Activated CD8-positive, alpha-beta memory T cell treated with anti-CD3 and anti-CD28 coated beads, Interleukin-2, amount 10 ng/mL, durations not matched to agents 7 days and 5 days (primary cell): ENCODE measurements at regions of chr16 and their contacts with region 1.

Region 1: GRCh38 chr16:89860747-89861304 is 12.6 kb upstream of the TCF25 start:
- DNase-seq: peak; percentile 83
- ATAC-seq: peak; percentile 87
- H3K4me3 Mint-ChIP-seq: no peak overlapping the region
- H3K27ac Mint-ChIP-seq: no peak overlapping the region
- H3K4me1 Mint-ChIP-seq: peaks cover 27% of the 10 kb centered on the region
- H3K27me3 Mint-ChIP-seq: peaks cover 14% of the 10 kb centered on the region

Region 2: GRCh38 chr16:89536886-89537548 is 323.8 kb before region 1 on chr16:
- CTCF ChIA-PET with region 1: no interaction called
- DNase-seq: no peak
- ATAC-seq: no peak
- H3K4me3 Mint-ChIP-seq: no peak overlapping the region
- H3K27ac Mint-ChIP-seq: no peak overlapping the region
- H3K4me1 Mint-ChIP-seq: peaks cover 27% of the 10 kb centered on the region
- H3K27me3 Mint-ChIP-seq: no peaks in the 10 kb centered on the region

Region 3: GRCh38 chr16:89700100-89700648 is 160.7 kb before region 1 on chr16:
- CTCF ChIA-PET with region 1: interaction called, 93 read pairs
- DNase-seq: peak; percentile 98
- ATAC-seq: peak; percentile 38
- H3K4me3 Mint-ChIP-seq: peak overlapping the region; percentile 66
- H3K27ac Mint-ChIP-seq: peak overlapping the region; percentile 24
- H3K4me1 Mint-ChIP-seq: peaks cover 33% of the 10 kb centered on the region
- H3K27me3 Mint-ChIP-seq: no peaks in the 10 kb centered on the region

Region 4: GRCh38 chr16:89720813-89721545 is 139.8 kb before region 1 on chr16 and contains the starts of genes VPS9D1 and ZNF276:
- CTCF ChIA-PET with region 1: interaction called, 16 read pairs
- DNase-seq: peak; percentile 87
- ATAC-seq: peak; percentile 48
- H3K4me3 Mint-ChIP-seq: peak within 1 kb of the TSS; percentile 86
- H3K27ac Mint-ChIP-seq: peak within 1 kb of the TSS; percentile 99
- H3K4me1 Mint-ChIP-seq: peaks cover 46% of the 10 kb centered on the region
- H3K27me3 Mint-ChIP-seq: no peaks in the 10 kb centered on the region
- total RNA-seq, gene VPS9D1: 3.6 to 4.6 TPM
- total RNA-seq, gene ZNF276: 38.0 to 58.1 TPM

Region 5: DNA sequence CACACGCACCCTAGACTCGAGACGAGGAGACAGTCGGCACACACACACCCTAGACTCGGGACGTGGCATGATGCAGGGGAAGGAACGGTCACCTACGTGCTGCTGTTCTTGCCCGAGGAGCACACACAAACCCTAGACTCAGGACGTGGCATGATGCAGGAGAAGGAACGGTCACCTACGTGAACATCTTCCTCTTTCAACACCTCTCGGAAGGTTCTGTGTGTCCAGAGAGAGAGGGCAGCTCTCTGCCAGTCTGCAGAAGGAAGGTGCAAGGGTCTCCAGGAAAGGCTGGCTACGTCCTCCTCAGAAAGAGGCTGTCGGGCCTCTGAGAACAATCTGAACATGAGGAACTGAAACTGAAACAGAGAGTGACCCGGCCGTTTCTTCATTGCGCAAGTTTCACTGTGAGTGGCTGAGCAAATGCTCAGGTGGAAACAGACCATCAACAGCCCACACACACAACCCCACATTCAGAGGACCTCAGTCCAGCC is 96.1 kb before region 1 on chr16:
- CTCF ChIA-PET with region 1: interaction called, 18 read pairs
- DNase-seq: peak; percentile 90
- ATAC-seq: peak; percentile 89
- H3K4me3 Mint-ChIP-seq: peak overlapping the region; percentile 85
- H3K27ac Mint-ChIP-seq: peak overlapping the region; percentile 94
- H3K4me1 Mint-ChIP-seq: peaks cover 59% of the 10 kb centered on the region
- H3K27me3 Mint-ChIP-seq: no peaks in the 10 kb centered on the region

Region 6: DNA sequence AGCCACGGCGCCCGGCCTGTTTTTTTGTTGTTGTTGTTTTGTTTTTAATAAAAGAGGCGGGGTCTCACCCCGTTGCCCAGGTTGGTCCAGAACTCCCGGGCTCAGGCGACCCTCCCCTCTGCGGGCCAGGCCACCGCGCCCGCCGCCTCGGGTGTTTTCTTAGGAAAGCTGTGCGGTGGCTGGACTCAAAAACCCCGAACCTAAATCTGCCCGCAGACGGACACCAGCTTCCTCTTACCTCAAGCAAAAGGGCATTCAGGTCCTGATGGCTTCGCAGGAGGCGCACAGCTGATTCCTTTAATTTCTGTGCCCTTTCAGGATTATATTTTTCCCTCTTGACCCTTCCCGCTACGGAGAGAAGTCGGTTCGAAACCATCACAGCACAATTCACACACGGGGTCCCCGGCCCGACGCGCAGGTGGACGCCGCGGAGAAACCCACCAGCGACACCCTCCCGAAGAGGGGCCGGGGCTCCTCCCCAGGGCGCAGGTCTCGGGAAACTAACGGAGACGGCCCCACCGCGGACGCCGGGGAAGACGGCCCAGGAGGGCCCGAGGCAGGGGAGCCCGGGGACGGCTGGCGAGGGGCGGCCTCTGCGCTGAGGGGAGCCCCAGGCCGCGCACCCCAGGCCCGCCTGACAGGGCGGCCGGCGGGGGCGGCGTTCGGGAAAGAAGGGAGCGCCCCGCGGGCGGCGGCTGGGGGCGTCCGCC is 45.0 kb before region 1 on chr16:
- CTCF ChIA-PET with region 1: interaction called, 26 read pairs
- DNase-seq: no peak
- ATAC-seq: peak; percentile 43
- H3K4me3 Mint-ChIP-seq: peak overlapping the region; percentile 93
- H3K27ac Mint-ChIP-seq: peak overlapping the region; percentile 78
- H3K4me1 Mint-ChIP-seq: peaks cover 34% of the 10 kb centered on the region
- H3K27me3 Mint-ChIP-seq: no peaks in the 10 kb centered on the region

Region 7: GRCh38 chr16:89880477-89881367 is 19.9 kb after region 1 on chr16:
- CTCF ChIA-PET with region 1: no interaction called
- DNase-seq: no peak
- ATAC-seq: no peak
- H3K4me3 Mint-ChIP-seq: no peak overlapping the region
- H3K27ac Mint-ChIP-seq: no peak overlapping the region
- H3K4me1 Mint-ChIP-seq: no peaks in the 10 kb centered on the region
- H3K27me3 Mint-ChIP-seq: no peaks in the 10 kb centered on the region

Region 8: GRCh38 chr16:89909777-89910716 is 49.2 kb after region 1 on chr16:
- CTCF ChIA-PET with region 1: interaction called, 10 read pairs
- DNase-seq: peak; percentile 78
- ATAC-seq: peak; percentile 87
- H3K4me3 Mint-ChIP-seq: no peak overlapping the region
- H3K27ac Mint-ChIP-seq: no peak overlapping the region
- H3K4me1 Mint-ChIP-seq: peaks cover 10% of the 10 kb centered on the region
- H3K27me3 Mint-ChIP-seq: no peaks in the 10 kb centered on the region